Activated CD4-positive, alpha-beta memory T cell treated with anti-CD3 and anti-CD28 coated beads, Interleukin-2, amount 10 ng/mL, durations not matched to agents 7 days and 5 days (primary cell): ENCODE measurements at regions of chr10 and their contacts with region 1.

Region 1: GRCh38 chr10:79195091-79195923 is 126.5 kb downstream of the ZMIZ1 start:
- DNase-seq: peak; percentile 82
- H3K4me3 Mint-ChIP-seq: no peak overlapping the region
- H3K27ac Mint-ChIP-seq: no peak overlapping the region
- H3K4me1 Mint-ChIP-seq: no peaks in the 10 kb centered on the region
- H3K27me3 Mint-ChIP-seq: no peaks in the 10 kb centered on the region

Region 2: DNA sequence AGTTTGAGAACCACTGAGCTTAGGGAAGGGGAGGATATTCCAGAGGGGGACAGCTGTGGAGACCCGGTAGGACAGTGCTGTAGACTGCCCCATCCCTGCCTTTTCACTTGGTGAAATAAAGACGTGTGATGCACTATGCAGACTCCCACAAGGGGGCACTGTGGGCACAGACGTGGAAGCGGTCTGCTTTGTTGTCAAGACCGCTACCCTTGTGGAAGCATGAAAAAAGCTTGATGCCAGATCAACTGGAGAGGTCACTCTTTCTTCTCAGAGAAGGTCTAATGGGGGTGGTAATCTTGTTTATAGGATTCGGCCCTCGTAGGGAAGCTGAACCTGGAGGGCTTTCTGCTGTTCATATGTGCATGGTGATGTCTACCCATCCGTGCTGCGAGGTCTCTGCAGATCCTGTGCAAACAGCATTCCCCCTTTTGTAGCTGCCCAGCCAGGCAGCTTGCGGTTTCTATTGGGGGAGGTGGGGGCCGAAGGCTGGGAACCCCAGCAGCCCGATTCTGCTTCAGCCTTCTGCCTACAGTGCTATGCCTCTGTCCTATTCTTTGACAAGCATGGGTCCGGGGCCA is 1147.9 kb before region 1 on chr10:
- CTCF ChIA-PET with region 1: interaction called, 27 read pairs
- POLR2A ChIA-PET with region 1: no interaction called
- DNase-seq: peak; percentile 85
- H3K4me3 Mint-ChIP-seq: no peak overlapping the region
- H3K27ac Mint-ChIP-seq: no peak overlapping the region
- H3K4me1 Mint-ChIP-seq: peaks cover 31% of the 10 kb centered on the region
- H3K27me3 Mint-ChIP-seq: no peaks in the 10 kb centered on the region

Region 3: GRCh38 chr10:78657163-78657861 is 538.0 kb before region 1 on chr10:
- CTCF ChIA-PET with region 1: interaction called, 10 read pairs
- POLR2A ChIA-PET with region 1: no interaction called
- DNase-seq: peak; percentile 69
- H3K4me3 Mint-ChIP-seq: no peak overlapping the region
- H3K27ac Mint-ChIP-seq: no peak overlapping the region
- H3K4me1 Mint-ChIP-seq: no peaks in the 10 kb centered on the region
- H3K27me3 Mint-ChIP-seq: peaks cover 14% of the 10 kb centered on the region

Region 4: GRCh38 chr10:78664929-78665553 is 530.3 kb before region 1 on chr10:
- CTCF ChIA-PET with region 1: interaction called, 11 read pairs
- POLR2A ChIA-PET with region 1: no interaction called
- DNase-seq: no peak
- H3K4me3 Mint-ChIP-seq: no peak overlapping the region
- H3K27ac Mint-ChIP-seq: no peak overlapping the region
- H3K4me1 Mint-ChIP-seq: no peaks in the 10 kb centered on the region
- H3K27me3 Mint-ChIP-seq: peaks cover 43% of the 10 kb centered on the region

Region 5: GRCh38 chr10:79073784-79074432 is 121.4 kb before region 1 on chr10:
- CTCF ChIA-PET with region 1: interaction called, 16 read pairs
- POLR2A ChIA-PET with region 1: no interaction called
- DNase-seq: no peak
- H3K4me3 Mint-ChIP-seq: no peak overlapping the region
- H3K27ac Mint-ChIP-seq: no peak overlapping the region
- H3K4me1 Mint-ChIP-seq: peaks cover 7% of the 10 kb centered on the region
- H3K27me3 Mint-ChIP-seq: peaks cover 12% of the 10 kb centered on the region

Region 6: GRCh38 chr10:79184145-79184625 is 11.1 kb before region 1 on chr10:
- CTCF ChIA-PET with region 1: interaction called, 11 read pairs
- POLR2A ChIA-PET with region 1: no interaction called
- DNase-seq: no peak
- H3K4me3 Mint-ChIP-seq: no peak overlapping the region
- H3K27ac Mint-ChIP-seq: no peak overlapping the region
- H3K4me1 Mint-ChIP-seq: no peaks in the 10 kb centered on the region
- H3K27me3 Mint-ChIP-seq: no peaks in the 10 kb centered on the region